Heart left ventricle (tissue), 16 donors: ENCODE measurements at regions of chr13 and their contacts with region 1.

Region 1: GRCh38 chr13:41054212-41054877 is 7.0 kb upstream of the WBP4 start:
- DNase-seq: no peak
- ATAC-seq: peak in 2 of 4 donors; percentile 38 to 47
- H3K4me3 ChIP-seq: no peak overlapping the region
- H3K27ac ChIP-seq: peak overlapping the region in 11 of 12 donors; percentile 13 to 86 (median 64)
- H3K4me1 ChIP-seq: peaks cover 4 to 97% (median 79%) of the 10 kb centered on the region in 12 donors
- H3K27me3 ChIP-seq: no peaks in the 10 kb centered on the region
- CTCF ChIP-seq: peak; percentile 23 to 63 (median 52)
- POLR2A ChIP-seq: no peak

Region 2: DNA sequence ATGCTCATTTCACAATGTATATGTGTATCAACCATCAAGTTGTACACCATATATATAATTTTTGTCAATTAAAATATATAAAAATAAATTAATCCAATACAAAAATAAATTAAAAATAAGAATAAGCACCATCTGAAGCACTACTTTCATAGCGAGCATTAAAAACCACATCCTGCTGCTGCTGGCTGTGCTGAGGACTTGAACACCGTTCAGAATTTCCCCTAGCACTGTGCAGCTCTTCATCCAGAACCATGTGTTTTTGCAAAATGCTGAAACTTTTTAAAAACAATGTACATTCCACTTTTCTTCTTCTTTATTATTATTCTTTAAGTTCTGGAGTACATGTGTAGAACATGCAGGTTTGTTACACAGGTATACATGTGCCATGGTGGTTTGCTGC is 347.9 kb before region 1 on chr13:
- intact Hi-C with region 1: no loop called
- DNase-seq: no peak
- ATAC-seq: no peak
- H3K4me3 ChIP-seq: no peak overlapping the region
- H3K27ac ChIP-seq: no peak overlapping the region
- H3K4me1 ChIP-seq: no peaks in the 10 kb centered on the region
- H3K27me3 ChIP-seq: no peaks in the 10 kb centered on the region
- CTCF ChIP-seq: no peak
- POLR2A ChIP-seq: no peak

Region 3: GRCh38 chr13:40922437-40923040 is 131.8 kb before region 1 on chr13:
- intact Hi-C with region 1: loop called in 2 of 10 experiments (anchors 10 kb)
- DNase-seq: peak in 3 of 5 donors; percentile 13 to 62 (median 29)
- ATAC-seq: no peak
- H3K4me3 ChIP-seq: peak overlapping the region in 2 of 12 donors; percentile 4 to 76
- H3K27ac ChIP-seq: peak overlapping the region in 1 of 12 donors; percentile 88
- H3K4me1 ChIP-seq: peaks cover 0 to 16% (median 7%) of the 10 kb centered on the region in 12 donors
- H3K27me3 ChIP-seq: no peaks in the 10 kb centered on the region
- CTCF ChIP-seq: no peak
- POLR2A ChIP-seq: no peak

Region 4: DNA sequence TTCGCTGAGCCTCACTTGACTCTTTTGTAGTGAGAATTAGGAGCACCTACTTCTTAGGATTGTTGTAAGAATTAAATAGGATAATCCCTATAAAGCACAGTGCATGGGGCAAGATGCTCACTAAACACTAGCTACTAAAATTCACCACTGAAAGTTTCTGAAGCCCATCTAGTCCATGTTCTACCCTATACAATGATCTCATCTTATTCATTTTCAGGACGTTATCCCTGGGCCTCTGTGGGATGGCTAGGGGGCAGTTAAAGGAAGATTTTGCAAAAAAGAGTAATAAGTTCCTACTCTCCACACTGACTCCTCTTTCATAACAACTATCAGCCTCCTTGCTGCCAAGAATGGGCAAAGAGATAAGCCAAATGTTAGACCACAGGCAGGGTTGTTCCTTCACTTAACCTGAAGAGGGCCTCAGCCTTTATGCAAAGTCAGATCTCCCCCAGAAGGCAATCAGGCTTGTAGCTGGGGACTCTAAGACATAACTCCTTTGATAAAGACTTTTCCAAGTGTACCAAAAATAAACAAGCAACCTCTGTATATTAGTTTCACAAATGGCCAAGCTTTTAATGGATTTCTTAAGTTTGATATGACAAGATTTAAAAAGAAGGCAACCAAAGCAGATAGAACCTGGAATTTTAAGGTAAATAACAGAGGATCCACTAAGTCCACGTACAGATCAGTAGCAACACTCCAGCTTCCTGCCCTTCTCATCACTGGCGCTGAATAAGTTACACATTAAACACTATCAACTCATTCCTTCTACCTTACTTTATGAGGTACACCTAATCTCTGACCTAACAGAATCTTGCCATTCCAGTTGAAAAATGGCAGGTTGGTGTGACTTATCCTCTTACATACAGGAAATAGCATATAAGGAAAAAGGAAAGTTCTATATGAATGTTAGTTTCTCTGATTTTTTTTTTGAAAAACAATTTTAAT is 79.6 kb before region 1 on chr13:
- intact Hi-C with region 1: loop called in 2 of 10 experiments (anchors 10 kb)
- DNase-seq: no peak
- ATAC-seq: peak; percentile 15 to 83 (median 67)
- H3K4me3 ChIP-seq: no peak overlapping the region
- H3K27ac ChIP-seq: peak overlapping the region in 1 of 12 donors; percentile 27
- H3K4me1 ChIP-seq: peaks cover 11 to 100% (median 79%) of the 10 kb centered on the region in 12 donors
- H3K27me3 ChIP-seq: no peaks in the 10 kb centered on the region
- CTCF ChIP-seq: peak in 11 of 12 donors; percentile 10 to 53 (median 39)
- POLR2A ChIP-seq: no peak

Region 5: GRCh38 chr13:40982772-40983171 is 71.6 kb before region 1 on chr13:
- intact Hi-C with region 1: loop called in 3 of 10 experiments (anchors 5 to 10 kb)
- DNase-seq: peak in 4 of 5 donors; percentile 33 to 73 (median 49)
- ATAC-seq: peak; percentile 64 to 88 (median 72)
- H3K4me3 ChIP-seq: peak overlapping the region in 11 of 12 donors; percentile 24 to 57 (median 45)
- H3K27ac ChIP-seq: peak overlapping the region; percentile 73 to 95 (median 82)
- H3K4me1 ChIP-seq: peaks cover 20 to 91% (median 56%) of the 10 kb centered on the region in 12 donors
- H3K27me3 ChIP-seq: no peaks in the 10 kb centered on the region
- CTCF ChIP-seq: no peak
- POLR2A ChIP-seq: peak in 1 of 2 donors; percentile 30

Region 6: GRCh38 chr13:41019011-41019487 is 35.3 kb before region 1 on chr13 and contains the start of gene ELF1:
- intact Hi-C with region 1: loop called in 2 of 10 experiments (anchors 5 kb)
- DNase-seq: peak in 2 of 5 donors; percentile 32 to 43
- ATAC-seq: peak; percentile 76 to 88 (median 86)
- H3K4me3 ChIP-seq: peak within 1 kb of the TSS in 9 of 12 donors; percentile 5 to 59 (median 25)
- H3K27ac ChIP-seq: peak within 1 kb of the TSS; percentile 25 to 93 (median 60)
- H3K4me1 ChIP-seq: peaks cover 0 to 74% (median 51%) of the 10 kb centered on the region in 12 donors
- H3K27me3 ChIP-seq: no peaks in the 10 kb centered on the region
- CTCF ChIP-seq: no peak
- POLR2A ChIP-seq: no peak
- total RNA-seq, gene ELF1: 28.6 to 75.4 (median 35.3) TPM

Region 7: GRCh38 chr13:41111454-41111853 is 57.1 kb after region 1 on chr13:
- intact Hi-C with region 1: no loop called
- DNase-seq: no peak
- ATAC-seq: no peak
- H3K4me3 ChIP-seq: no peak overlapping the region
- H3K27ac ChIP-seq: no peak overlapping the region
- H3K4me1 ChIP-seq: no peaks in the 10 kb centered on the region
- H3K27me3 ChIP-seq: no peaks in the 10 kb centered on the region
- CTCF ChIP-seq: no peak
- POLR2A ChIP-seq: no peak